MCF 10A (cell line): ENCODE measurements at regions of chr1 and their contacts with region 1.

Region 1: GRCh38 chr1:225318706-225319575 is 108.9 kb downstream of the LBR start:
- DNase-seq: peak; percentile 85
- H3K4me3 Mint-ChIP-seq: no peak overlapping the region
- H3K27ac Mint-ChIP-seq: no peak overlapping the region
- H3K4me1 Mint-ChIP-seq: no peaks in the 10 kb centered on the region
- H3K27me3 Mint-ChIP-seq: no peaks in the 10 kb centered on the region
- CTCF ChIP-seq: peak; percentile 97

Region 2: GRCh38 chr1:224300314-224300713 is 1018.6 kb before region 1 on chr1:
- CTCF ChIA-PET with region 1: no interaction called
- POLR2A ChIA-PET with region 1: no interaction called
- intact Hi-C with region 1: no loop called
- DNase-seq: peak; percentile 90
- H3K4me3 Mint-ChIP-seq: no peak overlapping the region
- H3K27ac Mint-ChIP-seq: peak overlapping the region; percentile 65
- H3K4me1 Mint-ChIP-seq: peaks cover 6% of the 10 kb centered on the region
- H3K27me3 Mint-ChIP-seq: no peaks in the 10 kb centered on the region
- CTCF ChIP-seq: no peak

Region 3: DNA sequence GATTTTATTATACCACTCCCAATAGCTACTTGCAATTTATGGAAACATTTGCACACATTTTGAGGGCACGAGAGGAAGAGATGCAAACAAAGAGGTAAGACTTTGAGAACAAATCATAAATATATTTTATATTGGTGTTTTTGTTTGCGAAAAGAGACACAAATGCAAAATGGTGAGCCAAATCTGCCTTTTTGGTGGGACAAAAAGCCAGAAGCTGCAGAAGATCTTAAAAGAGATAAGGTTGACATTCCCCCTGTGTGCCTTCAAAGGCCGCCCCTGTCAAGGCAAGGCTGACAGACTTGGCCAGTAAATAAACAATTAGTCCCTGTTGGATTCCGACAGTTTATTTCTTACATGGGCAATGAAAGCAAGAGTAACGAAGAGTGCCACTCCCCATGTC is 13.9 kb before region 1 on chr1:
- CTCF ChIA-PET with region 1: interaction called, 108 read pairs
- POLR2A ChIA-PET with region 1: interaction called, 4 read pairs
- intact Hi-C with region 1: no loop called
- DNase-seq: no peak
- H3K4me3 Mint-ChIP-seq: no peak overlapping the region
- H3K27ac Mint-ChIP-seq: no peak overlapping the region
- H3K4me1 Mint-ChIP-seq: peaks cover under 1% of the 10 kb centered on the region
- H3K27me3 Mint-ChIP-seq: no peaks in the 10 kb centered on the region
- CTCF ChIP-seq: no peak

Region 4: DNA sequence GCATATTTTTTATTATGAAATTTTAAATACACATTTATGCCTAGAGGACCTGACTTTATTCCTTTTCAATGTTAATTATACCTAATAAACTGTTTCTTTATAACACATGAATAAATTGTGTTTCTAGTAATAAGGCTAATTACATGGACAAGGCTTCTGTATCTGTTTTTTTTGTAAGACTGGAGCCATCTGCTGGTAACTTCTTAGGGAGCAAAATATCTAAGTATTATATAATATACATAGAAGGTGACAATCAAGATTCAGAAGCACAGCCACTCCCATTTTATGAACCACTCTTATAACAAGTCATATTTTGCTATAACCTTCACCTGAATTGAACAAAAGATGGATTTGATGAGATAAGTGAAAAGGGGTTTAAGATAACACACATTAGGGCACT is 24.7 kb after region 1 on chr1:
- CTCF ChIA-PET with region 1: interaction called, 47 read pairs
- POLR2A ChIA-PET with region 1: interaction called, 3 read pairs
- intact Hi-C with region 1: loop called (anchors 1 kb)
- DNase-seq: peak; percentile 54
- H3K4me3 Mint-ChIP-seq: no peak overlapping the region
- H3K27ac Mint-ChIP-seq: no peak overlapping the region
- H3K4me1 Mint-ChIP-seq: no peaks in the 10 kb centered on the region
- H3K27me3 Mint-ChIP-seq: no peaks in the 10 kb centered on the region
- CTCF ChIP-seq: peak; percentile 54

Region 5: GRCh38 chr1:225368036-225368552 is 49.2 kb after region 1 on chr1:
- CTCF ChIA-PET with region 1: interaction called, 13 read pairs
- POLR2A ChIA-PET with region 1: no interaction called
- intact Hi-C with region 1: no loop called
- DNase-seq: no peak
- H3K4me3 Mint-ChIP-seq: no peak overlapping the region
- H3K27ac Mint-ChIP-seq: no peak overlapping the region
- H3K4me1 Mint-ChIP-seq: no peaks in the 10 kb centered on the region
- H3K27me3 Mint-ChIP-seq: no peaks in the 10 kb centered on the region
- CTCF ChIP-seq: no peak

Region 6: GRCh38 chr1:225428068-225428880 is 109.3 kb after region 1 on chr1:
- CTCF ChIA-PET with region 1: interaction called, 48 read pairs
- POLR2A ChIA-PET with region 1: interaction called, 16 read pairs
- intact Hi-C with region 1: loop called (anchors 1 kb)
- DNase-seq: peak; percentile 99
- H3K4me3 Mint-ChIP-seq: peak overlapping the region; percentile 75
- H3K27ac Mint-ChIP-seq: peak overlapping the region; percentile 20
- H3K4me1 Mint-ChIP-seq: peaks cover 35% of the 10 kb centered on the region
- H3K27me3 Mint-ChIP-seq: no peaks in the 10 kb centered on the region
- CTCF ChIP-seq: no peak

Region 7: DNA sequence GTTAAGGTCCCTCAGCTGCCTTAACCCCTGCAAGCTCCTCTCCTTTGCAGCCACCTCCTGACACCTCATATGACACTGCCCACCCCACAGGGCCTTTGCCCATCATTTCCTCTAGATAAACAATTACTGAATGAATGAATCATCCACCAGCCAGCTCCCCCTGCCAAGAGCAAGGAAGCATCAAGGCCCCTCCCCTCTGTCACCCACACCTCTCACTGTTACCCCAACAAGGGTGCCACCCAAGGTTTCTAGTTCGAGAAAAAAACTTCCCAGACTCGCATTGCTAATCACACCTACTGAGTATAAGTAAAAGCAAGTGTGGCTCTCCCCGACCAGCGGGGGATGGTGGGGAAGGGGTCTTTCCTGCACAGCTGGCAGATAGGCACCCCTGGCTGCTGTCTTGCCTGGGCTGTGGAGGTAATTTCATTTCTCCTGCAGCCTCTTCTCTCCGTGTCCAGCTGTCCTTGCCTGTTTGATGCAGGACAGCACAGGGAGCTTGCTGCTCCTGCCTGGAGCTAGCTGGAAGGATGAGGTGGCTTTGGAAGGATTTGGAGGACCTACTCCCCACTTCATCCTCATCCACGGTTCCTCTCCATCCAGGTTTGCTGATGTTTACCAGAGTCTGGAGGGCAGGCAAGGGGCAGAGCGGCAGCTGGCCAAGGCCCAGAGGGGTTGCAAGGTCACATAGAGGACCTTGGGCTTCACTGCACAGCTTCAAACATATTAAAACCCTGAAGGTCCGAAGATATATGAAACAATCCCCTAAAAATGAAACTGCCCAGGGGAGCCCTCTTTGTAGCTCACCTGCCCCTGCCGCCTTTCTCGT is 142.0 kb after region 1 on chr1:
- CTCF ChIA-PET with region 1: interaction called, 17 read pairs
- POLR2A ChIA-PET with region 1: interaction called, 8 read pairs
- intact Hi-C with region 1: loop called (anchors 5 kb)
- DNase-seq: peak; percentile 84
- H3K4me3 Mint-ChIP-seq: no peak overlapping the region
- H3K27ac Mint-ChIP-seq: no peak overlapping the region
- H3K4me1 Mint-ChIP-seq: peaks cover 70% of the 10 kb centered on the region
- H3K27me3 Mint-ChIP-seq: no peaks in the 10 kb centered on the region
- CTCF ChIP-seq: no peak

Region 8: DNA sequence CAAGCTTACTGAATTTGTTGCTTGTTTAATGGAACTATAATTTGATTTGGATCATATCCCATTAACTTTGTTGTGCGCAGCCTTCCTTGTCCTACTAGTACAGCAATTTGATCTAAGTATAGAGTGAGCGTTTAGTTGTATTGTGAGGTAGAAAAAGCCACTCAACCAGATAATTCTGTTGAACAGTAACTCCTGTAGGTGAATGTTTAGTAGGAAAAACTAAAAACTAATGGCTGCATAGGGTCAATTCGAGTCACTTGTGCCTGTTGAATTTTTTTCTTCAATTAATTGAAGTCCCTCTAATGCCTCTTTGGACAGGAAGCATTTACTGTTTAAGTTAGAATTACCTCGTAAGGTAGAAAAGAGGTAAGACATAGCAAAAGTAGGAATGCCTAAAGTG is 476.0 kb after region 1 on chr1:
- CTCF ChIA-PET with region 1: no interaction called
- POLR2A ChIA-PET with region 1: no interaction called
- intact Hi-C with region 1: no loop called
- DNase-seq: no peak
- H3K4me3 Mint-ChIP-seq: no peak overlapping the region
- H3K27ac Mint-ChIP-seq: no peak overlapping the region
- H3K4me1 Mint-ChIP-seq: no peaks in the 10 kb centered on the region
- H3K27me3 Mint-ChIP-seq: no peaks in the 10 kb centered on the region
- CTCF ChIP-seq: no peak

Region 9: DNA sequence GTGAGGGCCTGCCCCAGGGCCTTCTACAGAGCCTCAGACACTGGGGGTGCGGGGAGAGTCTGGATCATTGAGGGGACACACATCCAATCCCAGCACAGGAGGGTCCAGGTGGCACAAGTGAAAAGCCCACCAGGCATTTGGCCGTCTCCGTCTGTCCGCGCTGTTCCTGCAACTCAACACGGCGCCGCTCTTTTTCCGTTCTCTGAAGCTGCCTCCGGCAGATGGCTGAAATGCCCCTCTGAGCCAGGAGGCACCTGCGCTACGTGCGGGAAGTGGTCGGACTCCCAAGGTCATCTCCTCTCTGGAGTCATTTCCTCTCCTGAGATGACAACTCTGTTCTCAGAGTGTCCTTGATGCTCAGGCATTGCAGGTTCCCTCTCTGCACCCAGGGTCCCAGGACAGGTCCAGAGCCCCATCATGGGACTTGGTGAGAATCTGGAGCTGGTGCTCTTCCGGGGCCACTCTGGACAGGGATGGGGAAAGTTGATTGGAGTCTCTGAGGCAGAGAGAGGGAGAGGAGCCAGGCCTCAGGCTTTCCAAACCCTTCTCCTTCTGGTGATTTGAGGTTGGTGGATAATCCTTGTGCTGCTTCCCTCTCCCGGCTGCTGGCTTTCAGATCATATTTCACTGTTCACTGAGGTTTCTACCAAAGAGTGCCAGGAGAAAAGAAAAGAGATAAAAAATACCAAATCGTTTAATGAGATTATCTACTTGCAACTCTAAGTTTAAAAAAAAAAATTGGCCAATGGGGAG is 890.5 kb after region 1 on chr1:
- CTCF ChIA-PET with region 1: no interaction called
- POLR2A ChIA-PET with region 1: no interaction called
- intact Hi-C with region 1: no loop called
- DNase-seq: no peak
- H3K4me3 Mint-ChIP-seq: no peak overlapping the region
- H3K27ac Mint-ChIP-seq: no peak overlapping the region
- H3K4me1 Mint-ChIP-seq: no peaks in the 10 kb centered on the region
- H3K27me3 Mint-ChIP-seq: no peaks in the 10 kb centered on the region
- CTCF ChIP-seq: no peak